ENCODE measurements at regions of chr3 and their contacts with region 1.

Region 1: GRCh38 chr3:121724130-121724529 is 25.4 kb downstream of the GOLGB1 start:
- DNase-seq: no peak
- ATAC-seq: no peak
- H3K4me3 ChIP-seq: no peak overlapping the region
- H3K27ac ChIP-seq: no peak overlapping the region
- H3K4me1 ChIP-seq: peaks cover 0 to 14% (median 0%) of the 10 kb centered on the region in 9 donors
- H3K27me3 ChIP-seq: no peaks in the 10 kb centered on the region
- CTCF ChIP-seq: no peak

Region 2: GRCh38 chr3:121660356-121661171 is 63.6 kb before region 1 on chr3 and contains the start of gene HCLS1:
- intact Hi-C with region 1: loop called in 1 of 10 experiments (anchors 10 kb)
- DNase-seq: peak; percentile 31 to 50
- ATAC-seq: peak; percentile 59 to 82 (median 68)
- H3K4me3 ChIP-seq: peak within 1 kb of the TSS in 8 of 10 donors; percentile 1 to 56 (median 44)
- H3K27ac ChIP-seq: peak within 1 kb of the TSS in 9 of 10 donors; percentile 44 to 93 (median 68)
- H3K4me1 ChIP-seq: peaks cover 0 to 47% (median 18%) of the 10 kb centered on the region in 9 donors
- H3K27me3 ChIP-seq: no peaks in the 10 kb centered on the region
- CTCF ChIP-seq: no peak
- total RNA-seq, gene HCLS1: 5.0 to 40.7 (median 8.6) TPM

Region 3: DNA sequence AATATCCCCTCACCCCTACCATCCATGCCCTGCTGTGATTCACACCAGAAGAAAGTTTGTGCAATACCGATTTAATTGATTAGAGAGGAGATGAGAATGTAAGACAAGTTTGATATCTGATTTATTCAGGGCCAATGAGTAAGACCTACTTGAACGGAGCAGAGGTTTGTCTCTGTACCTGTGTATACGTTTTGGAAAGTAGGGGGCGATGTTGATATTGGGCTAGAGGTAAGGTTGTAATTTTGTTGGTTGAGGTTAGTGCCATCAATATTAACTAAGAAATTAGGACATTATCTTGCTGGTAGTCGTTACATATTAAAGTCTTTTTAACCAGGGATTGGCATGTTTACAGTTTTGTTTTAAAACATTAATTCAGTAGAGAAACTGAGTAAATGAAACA is 131.4 kb after region 1 on chr3:
- intact Hi-C with region 1: no loop called
- DNase-seq: no peak
- ATAC-seq: no peak
- H3K4me3 ChIP-seq: no peak overlapping the region
- H3K27ac ChIP-seq: no peak overlapping the region
- H3K4me1 ChIP-seq: no peaks in the 10 kb centered on the region
- H3K27me3 ChIP-seq: no peaks in the 10 kb centered on the region
- CTCF ChIP-seq: peak in 6 of 9 donors; percentile 15 to 40 (median 24)